ENCODE measurements at regions of chr17 and their contacts with region 1.

Region 1: GRCh38 chr17:44899069-44899782 is at the start of gene EFTUD2:
- DNase-seq: peak; percentile 93 to 98 (median 96)
- H3K4me3 ChIP-seq: peak within 1 kb of the TSS; percentile 71 to 92
- H3K4me3 Mint-ChIP-seq: peak within 1 kb of the TSS; percentile 91 to 99 (median 94)
- H3K27ac ChIP-seq: peak within 1 kb of the TSS; percentile 85
- H3K27ac Mint-ChIP-seq: peak within 1 kb of the TSS; percentile 99 to 100 (median 100)
- H3K4me1 ChIP-seq: peaks cover 21% of the 10 kb centered on the region
- H3K4me1 Mint-ChIP-seq: peaks cover 18 to 48% (median 28%) of the 10 kb centered on the region in 4 donors
- H3K27me3 ChIP-seq: no peaks in the 10 kb centered on the region
- H3K27me3 Mint-ChIP-seq: no peaks in the 10 kb centered on the region
- total RNA-seq, gene EFTUD2: 98.9 to 101 TPM

Region 2: GRCh38 chr17:44689477-44690217 is 209.6 kb before region 1 on chr17 and contains the start of gene CCDC43:
- CTCF ChIA-PET with region 1: no interaction called
- POLR2A ChIA-PET with region 1: interaction called, 4 read pairs
- intact Hi-C with region 1: loop called (anchors 1 kb)
- DNase-seq: peak; percentile 91 to 93 (median 91)
- H3K4me3 ChIP-seq: peak within 1 kb of the TSS; percentile 76 to 78
- H3K4me3 Mint-ChIP-seq: peak within 1 kb of the TSS; percentile 96 to 99 (median 98)
- H3K27ac ChIP-seq: peak within 1 kb of the TSS; percentile 84
- H3K27ac Mint-ChIP-seq: peak within 1 kb of the TSS; percentile 92 to 98 (median 98)
- H3K4me1 ChIP-seq: peaks cover 17% of the 10 kb centered on the region
- H3K4me1 Mint-ChIP-seq: peaks cover 19 to 39% (median 25%) of the 10 kb centered on the region in 4 donors
- H3K27me3 ChIP-seq: no peaks in the 10 kb centered on the region
- H3K27me3 Mint-ChIP-seq: no peaks in the 10 kb centered on the region
- total RNA-seq, gene CCDC43: 17.9 to 18.8 TPM

Region 3: GRCh38 chr17:44947461-44948314 is 48.5 kb after region 1 on chr17 and contains the start of gene KIF18B:
- CTCF ChIA-PET with region 1: no interaction called
- POLR2A ChIA-PET with region 1: interaction called, 3 read pairs
- intact Hi-C with region 1: loop called (anchors 1 kb)
- DNase-seq: peak; percentile 86 to 90 (median 88)
- H3K4me3 ChIP-seq: peak within 1 kb of the TSS; percentile 74 to 80
- H3K4me3 Mint-ChIP-seq: peak within 1 kb of the TSS; percentile 90 to 98 (median 97)
- H3K27ac ChIP-seq: peak within 1 kb of the TSS; percentile 55
- H3K27ac Mint-ChIP-seq: peak within 1 kb of the TSS; percentile 77 to 98 (median 97)
- H3K4me1 ChIP-seq: peaks cover 19% of the 10 kb centered on the region
- H3K4me1 Mint-ChIP-seq: peaks cover 3 to 23% (median 14%) of the 10 kb centered on the region in 4 donors
- H3K27me3 ChIP-seq: no peaks in the 10 kb centered on the region
- H3K27me3 Mint-ChIP-seq: no peaks in the 10 kb centered on the region
- total RNA-seq, gene KIF18B: not detected

Region 4: GRCh38 chr17:44968226-44969143 is 69.3 kb after region 1 on chr17 and contains the start of gene C1QL1:
- CTCF ChIA-PET with region 1: no interaction called
- POLR2A ChIA-PET with region 1: no interaction called
- intact Hi-C with region 1: loop called (anchors 1 kb)
- DNase-seq: peak; percentile 71 to 79 (median 73)
- H3K4me3 ChIP-seq: peak within 1 kb of the TSS; percentile 47 to 55
- H3K4me3 Mint-ChIP-seq: peak within 1 kb of the TSS; percentile 64 to 90 (median 76)
- H3K27ac ChIP-seq: no peak within 1 kb of the TSS
- H3K27ac Mint-ChIP-seq: peak within 1 kb of the TSS in 3 of 7 donors; percentile 35 to 54 (median 38)
- H3K4me1 ChIP-seq: peaks cover 28% of the 10 kb centered on the region
- H3K4me1 Mint-ChIP-seq: peaks cover 12 to 42% (median 24%) of the 10 kb centered on the region in 4 donors
- H3K27me3 ChIP-seq: peaks cover 37% of the 10 kb centered on the region
- H3K27me3 Mint-ChIP-seq: peaks cover 22 to 48% of the 10 kb centered on the region in 2 donors
- total RNA-seq, gene C1QL1: not detected

Region 5: GRCh38 chr17:45051060-45051719 is 152.0 kb after region 1 on chr17 and contains the start of gene DCAKD:
- CTCF ChIA-PET with region 1: no interaction called
- POLR2A ChIA-PET with region 1: interaction called, 10 read pairs
- intact Hi-C with region 1: loop called (anchors 1 kb)
- DNase-seq: peak; percentile 88 to 91 (median 89)
- H3K4me3 ChIP-seq: peak within 1 kb of the TSS; percentile 66 to 98
- H3K4me3 Mint-ChIP-seq: peak within 1 kb of the TSS; percentile 87 to 95 (median 89)
- H3K27ac ChIP-seq: peak within 1 kb of the TSS; percentile 96
- H3K27ac Mint-ChIP-seq: peak within 1 kb of the TSS; percentile 93 to 98 (median 96)
- H3K4me1 ChIP-seq: peaks cover 42% of the 10 kb centered on the region
- H3K4me1 Mint-ChIP-seq: peaks cover 18 to 46% (median 31%) of the 10 kb centered on the region in 4 donors
- H3K27me3 ChIP-seq: no peaks in the 10 kb centered on the region
- H3K27me3 Mint-ChIP-seq: no peaks in the 10 kb centered on the region
- total RNA-seq, gene DCAKD: 32.0 to 32.1 TPM

Region 6: DNA sequence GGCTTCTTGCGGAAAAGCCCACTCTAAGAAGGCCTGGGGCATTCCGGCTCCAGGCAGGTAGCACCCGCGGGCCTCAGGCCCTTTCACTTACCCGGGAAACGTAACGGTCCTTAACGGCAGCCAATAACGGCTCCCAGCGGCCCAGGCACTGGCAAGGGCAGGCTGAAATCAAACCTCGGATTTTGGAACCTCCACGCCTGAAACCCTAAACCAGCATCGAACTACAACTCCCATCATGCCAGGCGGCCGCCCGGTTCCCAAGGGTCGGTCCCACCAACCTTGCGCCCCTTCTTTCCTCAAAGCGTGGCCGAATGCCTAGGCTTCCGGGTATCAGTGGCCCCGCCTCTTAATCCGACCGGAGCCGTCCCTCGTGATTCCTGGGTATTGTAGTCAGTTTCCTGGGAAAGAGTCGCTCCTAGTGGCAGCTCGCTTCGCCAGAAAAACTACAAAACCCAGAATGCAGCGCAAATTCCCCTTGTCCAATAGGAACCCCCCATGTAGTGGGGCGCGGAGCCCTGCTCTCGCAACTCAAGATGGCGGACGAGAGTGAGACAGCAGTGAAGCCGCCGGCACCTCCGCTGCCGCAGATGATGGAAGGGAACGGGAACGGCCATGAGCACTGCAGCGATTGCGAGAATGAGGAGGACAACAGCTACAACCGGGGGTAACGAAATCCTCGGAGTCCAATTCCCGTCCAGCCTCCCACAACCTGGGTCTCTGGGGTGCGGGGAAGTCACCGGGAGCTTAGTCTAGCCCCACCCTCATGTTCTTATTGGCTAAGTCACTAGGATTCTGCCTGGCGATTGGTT is 161.8 kb after region 1 on chr17 and contains the start of gene NMT1:
- CTCF ChIA-PET with region 1: no interaction called
- POLR2A ChIA-PET with region 1: interaction called, 6 read pairs
- intact Hi-C with region 1: loop called (anchors 1 kb)
- DNase-seq: peak; percentile 98 to 99 (median 98)
- H3K4me3 ChIP-seq: peak within 1 kb of the TSS; percentile 80 to 100
- H3K4me3 Mint-ChIP-seq: peak within 1 kb of the TSS; percentile 96 to 100 (median 100)
- H3K27ac ChIP-seq: peak within 1 kb of the TSS; percentile 88
- H3K27ac Mint-ChIP-seq: peak within 1 kb of the TSS; percentile 91 to 100 (median 98)
- H3K4me1 ChIP-seq: peaks cover 42% of the 10 kb centered on the region
- H3K4me1 Mint-ChIP-seq: peaks cover 20 to 64% (median 46%) of the 10 kb centered on the region in 4 donors
- H3K27me3 ChIP-seq: no peaks in the 10 kb centered on the region
- H3K27me3 Mint-ChIP-seq: no peaks in the 10 kb centered on the region
- total RNA-seq, gene NMT1: 125 to 126 TPM